Heart right ventricle (tissue), 16 donors: ENCODE measurements at regions of chr20 and their contacts with region 1.

Region 1: DNA sequence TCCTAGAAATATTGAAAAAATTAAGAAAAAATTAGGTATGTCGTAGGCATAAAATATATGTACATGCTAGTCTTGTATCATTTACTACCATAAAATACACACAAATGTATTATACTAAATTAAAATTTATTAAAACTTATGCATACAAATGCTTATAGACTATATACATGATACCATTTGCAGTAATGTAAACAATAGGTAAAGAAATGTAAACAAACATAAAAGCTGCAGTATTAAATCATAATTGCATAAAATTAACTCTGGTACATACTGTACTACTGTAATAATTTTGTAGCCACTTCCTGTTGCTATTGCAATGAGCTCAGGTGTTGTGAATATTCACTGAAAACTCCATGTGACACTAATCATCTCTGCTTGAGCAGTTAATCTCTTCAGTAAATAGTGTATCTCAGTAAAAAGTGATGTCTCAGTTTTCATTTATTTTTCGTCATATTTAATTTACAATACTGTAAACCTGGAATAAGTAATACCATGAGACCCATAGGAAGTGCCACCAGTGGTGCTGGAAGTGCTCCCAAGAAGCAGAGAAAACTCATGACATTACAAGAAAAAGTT is 29.3 kb downstream of the RALGAPB start:
- DNase-seq: no peak
- ATAC-seq: no peak
- H3K4me3 ChIP-seq: no peak overlapping the region
- H3K27ac ChIP-seq: no peak overlapping the region
- H3K4me1 ChIP-seq: no peaks in the 10 kb centered on the region
- H3K27me3 ChIP-seq: no peaks in the 10 kb centered on the region
- CTCF ChIP-seq: no peak

Region 2: GRCh38 chr20:38485041-38485440 is 16.9 kb before region 1 on chr20:
- intact Hi-C with region 1: loop called in 1 of 10 experiments (anchors 2 kb)
- DNase-seq: no peak
- ATAC-seq: peak in 1 of 8 donors; percentile 31
- H3K4me3 ChIP-seq: no peak overlapping the region
- H3K27ac ChIP-seq: no peak overlapping the region
- H3K4me1 ChIP-seq: peaks cover 0 to 10% (median 5%) of the 10 kb centered on the region in 9 donors
- H3K27me3 ChIP-seq: no peaks in the 10 kb centered on the region
- CTCF ChIP-seq: no peak

Region 3: DNA sequence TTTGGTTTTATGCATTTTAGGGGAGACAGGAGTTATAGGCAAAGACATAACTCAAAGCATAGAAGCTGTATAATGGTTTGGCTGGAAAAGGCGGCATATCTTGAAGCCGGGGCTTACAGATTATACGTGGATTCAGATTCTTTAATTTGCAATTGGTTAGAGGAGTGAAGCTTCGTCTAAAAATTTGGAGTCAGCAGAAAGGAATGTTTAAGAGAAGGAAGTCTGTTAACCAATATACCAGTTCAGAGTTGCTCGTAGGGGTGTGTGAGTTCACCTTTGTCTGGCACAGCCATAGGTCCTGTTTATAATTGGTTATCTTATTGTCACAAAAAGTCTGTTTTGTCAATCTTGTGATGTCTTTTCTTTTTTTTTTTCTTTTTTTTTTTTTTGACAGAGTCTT is 108.6 kb after region 1 on chr20:
- intact Hi-C with region 1: no loop called
- DNase-seq: no peak
- ATAC-seq: no peak
- H3K4me3 ChIP-seq: no peak overlapping the region
- H3K27ac ChIP-seq: no peak overlapping the region
- H3K4me1 ChIP-seq: no peaks in the 10 kb centered on the region
- H3K27me3 ChIP-seq: peaks cover 0 to 43% (median 21%) of the 10 kb centered on the region in 7 donors
- CTCF ChIP-seq: no peak